ENCODE measurements at regions of chr2 and their contacts with region 1.

Region 1: GRCh38 chr2:101697124-101698013 is at the start of gene MAP4K4:
- DNase-seq: peak; percentile 79 to 91 (median 86)
- ATAC-seq: peak; percentile 87
- H3K4me3 ChIP-seq: peak within 1 kb of the TSS; percentile 65
- H3K27ac ChIP-seq: peak within 1 kb of the TSS; percentile 85
- H3K4me1 ChIP-seq: peaks cover 9 to 13% of the 10 kb centered on the region in 2 experiments; a peak in 4 of 5 replicates
- H3K27me3 ChIP-seq: no peaks in the 10 kb centered on the region
- CTCF ChIP-seq: peak; percentile 25 to 58 (median 41); a peak in 4 of 6 replicates
- EP300 ChIP-seq: 0 out of 2 replicates have a peak, but pooled peaks have one; percentile 25
- POLR2A ChIP-seq: peak; percentile 61; the same call in 1 of the 2 replicates
- RAD21 ChIP-seq: 0 out of 4 replicates have a peak, but pooled peaks have one; percentile 4 to 6
- polyA plus RNA-seq, gene MAP4K4: 7.6 to 7.8 TPM

Region 2: DNA sequence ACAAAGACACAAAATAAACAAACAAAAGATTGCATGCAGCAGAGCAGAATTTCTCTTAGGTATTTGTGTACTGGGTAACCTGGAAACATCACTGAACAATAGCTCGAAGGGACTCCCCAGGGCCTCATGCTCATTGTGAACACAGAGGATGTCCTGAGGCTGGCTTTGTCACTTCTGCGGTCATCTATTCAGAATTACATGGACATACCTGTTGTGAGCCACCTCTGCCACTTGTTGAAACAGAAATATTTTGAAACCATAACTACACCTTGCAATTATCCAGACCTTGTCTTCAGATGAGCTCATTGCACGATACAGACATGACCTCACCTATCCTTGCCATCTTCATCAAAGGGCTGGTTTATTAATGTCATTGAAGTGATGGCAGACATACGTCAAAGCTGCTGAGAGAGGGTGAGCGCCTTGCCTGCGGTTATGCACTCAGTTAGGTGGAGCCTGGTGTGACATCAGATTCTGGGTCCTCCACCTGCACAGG is 286.6 kb before region 1 on chr2:
- CTCF ChIA-PET with region 1: no interaction called
- POLR2A ChIA-PET with region 1: no interaction called
- in situ Hi-C with region 1: no loop called
- intact Hi-C with region 1: no loop called
- DNase-seq: no peak
- ATAC-seq: no peak
- H3K4me3 ChIP-seq: no peak overlapping the region
- H3K27ac ChIP-seq: no peak overlapping the region
- H3K4me1 ChIP-seq: no peaks in the 10 kb centered on the region
- H3K27me3 ChIP-seq: peaks cover 4 to 68% of the 10 kb centered on the region in 2 experiments; a peak in 3 of 5 replicates
- CTCF ChIP-seq: no peak
- EP300 ChIP-seq: no peak
- POLR2A ChIP-seq: no peak
- RAD21 ChIP-seq: no peak

Region 3: GRCh38 chr2:101676674-101677073 is 20.7 kb before region 1 on chr2:
- CTCF ChIA-PET with region 1: no interaction called
- POLR2A ChIA-PET with region 1: no interaction called
- in situ Hi-C with region 1: no loop called
- intact Hi-C with region 1: no loop called
- DNase-seq: no peak
- ATAC-seq: no peak
- H3K4me3 ChIP-seq: no peak overlapping the region
- H3K27ac ChIP-seq: no peak overlapping the region
- H3K4me1 ChIP-seq: no peaks in the 10 kb centered on the region
- H3K27me3 ChIP-seq: no peaks in the 10 kb centered on the region
- CTCF ChIP-seq: no peak
- EP300 ChIP-seq: no peak
- POLR2A ChIP-seq: no peak
- RAD21 ChIP-seq: no peak

Region 4: DNA sequence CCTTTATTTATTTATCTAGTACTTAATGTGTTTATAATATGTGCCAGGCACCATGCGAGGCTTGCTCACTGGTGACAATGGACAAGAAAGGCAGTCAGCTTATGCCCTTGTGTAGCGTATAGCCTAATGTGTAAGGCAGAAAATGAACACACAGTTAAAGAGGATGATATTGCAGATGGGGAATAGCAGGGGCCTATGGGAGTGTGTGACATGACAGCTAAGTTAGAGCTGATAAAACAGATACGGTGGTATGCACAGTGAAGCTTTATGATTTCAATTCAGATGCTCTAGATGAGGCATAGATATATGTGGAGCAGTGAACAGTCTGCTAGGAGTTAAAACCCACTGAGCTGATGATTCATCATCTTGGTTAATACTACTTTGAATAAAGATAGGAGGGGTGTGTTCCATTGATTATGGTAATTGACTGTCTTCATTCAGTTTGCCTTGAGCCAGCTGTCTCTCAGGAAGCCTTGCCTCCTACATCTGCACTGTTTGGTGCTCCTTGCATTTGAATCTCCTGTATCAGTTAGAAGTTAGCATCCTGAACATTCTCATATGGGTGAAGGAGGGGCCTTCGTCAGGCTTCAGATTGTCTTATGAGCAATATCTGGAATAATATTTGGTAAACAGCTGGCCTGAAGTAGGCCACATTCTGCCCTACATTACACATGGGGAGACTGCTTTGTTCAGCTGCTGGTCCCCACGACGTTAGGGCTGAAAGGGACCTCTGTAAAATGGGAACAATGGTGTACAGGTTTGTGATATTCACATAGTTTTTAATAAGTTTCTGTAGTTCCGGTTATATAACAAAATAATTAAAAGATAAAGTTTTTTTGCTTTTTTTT is 13.3 kb after region 1 on chr2:
- CTCF ChIA-PET with region 1: no interaction called
- POLR2A ChIA-PET with region 1: interaction called, 18 read pairs
- in situ Hi-C with region 1: no loop called
- intact Hi-C with region 1: no loop called
- DNase-seq: peak in 1 of 4 experiments; percentile 13
- ATAC-seq: peak; percentile 68
- H3K4me3 ChIP-seq: no peak overlapping the region
- H3K27ac ChIP-seq: no peak overlapping the region
- H3K4me1 ChIP-seq: peaks cover 0 to 18% of the 10 kb centered on the region in 2 experiments; a peak in 2 of 5 replicates
- H3K27me3 ChIP-seq: no peaks in the 10 kb centered on the region
- CTCF ChIP-seq: no peak
- EP300 ChIP-seq: no peak
- POLR2A ChIP-seq: no peak
- RAD21 ChIP-seq: no peak

Region 5: DNA sequence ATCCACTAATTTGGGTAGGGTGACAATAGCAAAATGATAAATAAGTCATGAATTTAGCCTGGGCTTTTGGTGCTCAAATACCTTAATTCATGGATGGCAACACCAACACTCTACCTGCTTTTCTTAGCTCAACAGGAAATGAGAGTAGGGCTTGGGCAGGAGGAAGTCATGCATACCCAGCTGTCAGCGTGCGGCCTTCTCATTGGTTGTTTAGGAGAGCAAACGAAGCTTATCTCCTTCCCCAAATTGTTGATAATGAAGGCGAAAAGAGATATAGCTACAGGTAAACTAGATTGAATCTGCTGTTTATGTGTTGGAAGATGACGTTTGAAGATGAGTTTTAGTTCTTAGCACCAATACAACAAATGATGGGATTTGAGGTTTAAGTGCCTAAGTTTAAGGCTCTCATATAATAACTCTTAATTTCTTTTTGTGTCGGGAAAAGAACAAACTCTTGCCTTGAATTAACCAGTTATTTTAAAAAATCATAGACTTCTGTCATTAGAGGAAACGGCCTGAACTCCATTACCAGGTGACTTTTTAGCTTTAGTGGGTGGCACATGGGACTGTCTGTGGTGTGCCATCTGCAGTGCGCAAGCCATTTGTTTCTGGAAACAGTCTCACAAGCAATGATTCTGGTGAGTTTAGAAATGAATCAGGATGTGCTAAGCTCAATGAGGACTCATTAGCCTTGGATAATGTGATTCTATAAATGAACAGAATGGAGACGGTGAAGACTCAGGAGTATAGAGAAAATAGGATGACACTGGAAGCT is 19.9 kb after region 1 on chr2:
- CTCF ChIA-PET with region 1: no interaction called
- POLR2A ChIA-PET with region 1: interaction called, 11 read pairs
- in situ Hi-C with region 1: no loop called
- intact Hi-C with region 1: no loop called
- DNase-seq: no peak
- ATAC-seq: no peak
- H3K4me3 ChIP-seq: no peak overlapping the region
- H3K27ac ChIP-seq: no peak overlapping the region
- H3K4me1 ChIP-seq: peaks cover 3 to 4% of the 10 kb centered on the region in 2 experiments; a peak in 2 of 5 replicates
- H3K27me3 ChIP-seq: no peaks in the 10 kb centered on the region
- CTCF ChIP-seq: no peak
- EP300 ChIP-seq: no peak
- POLR2A ChIP-seq: no peak
- RAD21 ChIP-seq: no peak

Region 6: GRCh38 chr2:101831351-101831865 is 134.0 kb after region 1 on chr2:
- CTCF ChIA-PET with region 1: no interaction called
- POLR2A ChIA-PET with region 1: no interaction called
- in situ Hi-C with region 1: no loop called
- intact Hi-C with region 1: loop called (anchors 5 kb)
- DNase-seq: peak; percentile 43 to 74 (median 54)
- ATAC-seq: peak; percentile 99
- H3K4me3 ChIP-seq: no peak overlapping the region
- H3K27ac ChIP-seq: no peak overlapping the region; the same call in 2 of the 3 replicates
- H3K4me1 ChIP-seq: peaks cover 0 to 31% of the 10 kb centered on the region in 2 experiments; a peak in 3 of 5 replicates
- H3K27me3 ChIP-seq: no peaks in the 10 kb centered on the region
- CTCF ChIP-seq: peak; percentile 76 to 81 (median 80)
- EP300 ChIP-seq: no peak
- POLR2A ChIP-seq: no peak
- RAD21 ChIP-seq: peak; percentile 66 to 72

Region 7: DNA sequence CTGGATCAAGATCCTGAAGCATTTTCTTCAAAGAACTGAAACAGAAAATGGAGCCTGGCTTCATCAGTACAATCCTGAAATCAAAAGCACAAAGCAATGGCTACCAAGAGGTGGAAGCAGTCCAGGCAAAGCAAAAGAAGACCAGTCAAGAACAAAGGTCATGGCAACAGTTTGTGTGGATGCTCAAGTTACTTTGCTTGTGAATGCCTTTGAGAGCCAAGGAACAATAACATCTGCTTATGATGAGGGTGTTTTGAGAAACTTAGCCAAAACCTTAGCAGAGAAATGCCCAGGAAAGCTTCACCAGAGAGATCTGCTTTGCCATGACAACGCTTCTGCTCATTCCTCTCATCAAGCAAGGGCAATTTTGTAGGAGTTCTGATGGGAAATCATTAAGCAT is 1787.5 kb after region 1 on chr2:
- CTCF ChIA-PET with region 1: no interaction called
- POLR2A ChIA-PET with region 1: no interaction called
- in situ Hi-C with region 1: no loop called
- intact Hi-C with region 1: no loop called
- DNase-seq: no peak
- ATAC-seq: no peak
- H3K4me3 ChIP-seq: no peak overlapping the region
- H3K27ac ChIP-seq: no peak overlapping the region
- H3K4me1 ChIP-seq: no peaks in the 10 kb centered on the region
- H3K27me3 ChIP-seq: no peaks in the 10 kb centered on the region
- CTCF ChIP-seq: no peak
- EP300 ChIP-seq: no peak
- POLR2A ChIP-seq: no peak
- RAD21 ChIP-seq: no peak